ENCODE measurements at regions of chr14 and their contacts with region 1.

Region 1: DNA sequence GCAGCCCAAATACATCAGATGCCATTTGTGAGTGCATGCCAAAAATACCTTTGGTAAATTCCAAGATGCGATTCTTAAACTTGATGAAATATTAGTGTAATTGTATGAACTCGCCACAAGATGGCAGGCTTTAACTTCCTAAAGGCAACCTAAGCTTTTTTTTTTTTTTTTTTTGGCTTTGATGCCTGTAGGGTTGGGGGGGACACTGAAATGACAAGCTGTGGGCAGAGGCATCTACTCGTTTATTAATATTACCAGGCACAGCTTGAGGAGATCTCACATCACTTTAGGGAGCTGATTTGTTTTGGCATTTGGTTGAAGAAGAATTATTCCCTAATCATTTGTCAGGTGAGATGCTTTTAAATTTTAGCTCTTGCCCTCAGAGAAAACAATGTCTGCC is 126.7 kb upstream of the CCDC196 start:
- DNase-seq: peak; percentile 65
- H3K4me3 Mint-ChIP-seq: no peak overlapping the region
- H3K27ac Mint-ChIP-seq: no peak overlapping the region
- H3K4me1 Mint-ChIP-seq: no peaks in the 10 kb centered on the region
- H3K27me3 Mint-ChIP-seq: no peaks in the 10 kb centered on the region
- CTCF ChIP-seq: peak; percentile 62

Region 2: DNA sequence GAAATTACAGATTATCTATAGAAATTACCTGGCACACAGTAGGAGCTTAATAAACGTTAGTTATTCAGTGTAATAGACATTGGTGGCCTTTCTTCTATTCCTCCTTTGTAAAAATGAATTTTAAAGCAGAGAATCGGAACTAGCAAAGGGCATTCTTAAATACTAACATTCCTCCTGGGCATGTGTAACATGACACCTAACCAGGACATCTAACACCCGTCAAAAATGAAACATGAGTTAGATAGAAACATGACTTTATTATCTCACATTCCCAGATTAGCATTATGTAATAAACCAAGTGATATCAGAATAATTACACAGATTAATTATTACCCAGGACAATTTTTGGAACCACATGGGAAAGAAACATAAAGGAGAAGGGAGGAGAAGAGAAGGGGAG is 17.1 kb before region 1 on chr14:
- CTCF ChIA-PET with region 1: interaction called, 10 read pairs
- POLR2A ChIA-PET with region 1: no interaction called
- intact Hi-C with region 1: no loop called
- DNase-seq: peak; percentile 9
- H3K4me3 Mint-ChIP-seq: no peak overlapping the region
- H3K27ac Mint-ChIP-seq: no peak overlapping the region
- H3K4me1 Mint-ChIP-seq: peaks cover 5% of the 10 kb centered on the region
- H3K27me3 Mint-ChIP-seq: no peaks in the 10 kb centered on the region
- CTCF ChIP-seq: no peak

Region 3: DNA sequence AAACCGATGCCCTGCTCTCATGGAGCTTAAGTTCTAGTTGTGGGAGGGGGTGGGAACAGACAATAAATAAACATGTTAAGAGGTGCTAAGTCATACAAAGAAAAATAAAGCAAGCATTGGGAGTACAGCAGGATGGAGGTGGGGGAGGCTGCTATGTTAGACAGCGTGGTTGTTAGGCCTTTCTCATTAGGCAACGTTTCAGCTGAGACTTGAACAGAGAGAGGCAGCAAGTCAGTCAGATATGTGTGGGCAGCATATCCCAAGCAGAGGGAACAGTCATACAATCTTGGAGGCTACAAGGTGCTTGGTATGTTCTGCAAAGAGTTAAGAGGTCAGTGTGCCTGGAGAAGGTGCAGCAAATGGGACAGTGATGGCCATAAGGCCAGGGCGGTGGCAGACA is 29.0 kb after region 1 on chr14:
- CTCF ChIA-PET with region 1: interaction called, 11 read pairs
- POLR2A ChIA-PET with region 1: no interaction called
- intact Hi-C with region 1: no loop called
- DNase-seq: no peak
- H3K4me3 Mint-ChIP-seq: no peak overlapping the region
- H3K27ac Mint-ChIP-seq: no peak overlapping the region
- H3K4me1 Mint-ChIP-seq: no peaks in the 10 kb centered on the region
- H3K27me3 Mint-ChIP-seq: no peaks in the 10 kb centered on the region
- CTCF ChIP-seq: no peak

Region 4: GRCh38 chr14:66403183-66403582 is 43.7 kb after region 1 on chr14:
- CTCF ChIA-PET with region 1: interaction called, 103 read pairs
- POLR2A ChIA-PET with region 1: no interaction called
- intact Hi-C with region 1: loop called (anchors 1 kb)
- DNase-seq: peak; percentile 54
- H3K4me3 Mint-ChIP-seq: no peak overlapping the region
- H3K27ac Mint-ChIP-seq: no peak overlapping the region
- H3K4me1 Mint-ChIP-seq: no peaks in the 10 kb centered on the region
- H3K27me3 Mint-ChIP-seq: no peaks in the 10 kb centered on the region
- CTCF ChIP-seq: peak; percentile 28

Region 5: DNA sequence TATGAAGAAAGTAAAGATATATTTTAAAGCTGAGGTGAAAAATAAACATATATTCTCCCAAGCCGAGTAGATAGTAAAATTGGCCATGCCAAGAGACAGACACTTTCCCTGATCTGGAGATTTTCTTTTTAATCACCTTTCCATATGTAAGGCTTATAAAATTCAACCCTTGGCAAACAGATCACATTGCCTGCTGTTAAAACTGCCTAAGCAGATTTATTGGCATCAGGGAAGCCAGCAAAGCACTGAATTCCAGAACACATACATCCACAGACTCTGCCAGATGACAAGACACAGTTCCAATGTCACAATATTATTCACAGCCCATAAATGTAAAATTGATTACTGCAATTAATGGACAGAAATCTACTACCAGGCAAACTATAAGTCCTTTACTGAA is 751.5 kb after region 1 on chr14:
- CTCF ChIA-PET with region 1: no interaction called
- POLR2A ChIA-PET with region 1: no interaction called
- intact Hi-C with region 1: loop called (anchors 10 kb)
- DNase-seq: no peak
- H3K4me3 Mint-ChIP-seq: no peak overlapping the region
- H3K27ac Mint-ChIP-seq: no peak overlapping the region
- H3K4me1 Mint-ChIP-seq: no peaks in the 10 kb centered on the region
- H3K27me3 Mint-ChIP-seq: no peaks in the 10 kb centered on the region
- CTCF ChIP-seq: no peak

Measured in MCF 10A (cell line).